ENCODE measurements at regions of chr1 and their contacts with region 1.

Region 1: GRCh38 chr1:160219062-160219929 is 14.1 kb downstream of the PEA15 start:
- DNase-seq: peak; percentile 55
- H3K4me3 ChIP-seq: no peak overlapping the region
- H3K27ac ChIP-seq: peak overlapping the region; percentile 71
- H3K27me3 ChIP-seq: no peaks in the 10 kb centered on the region
- CTCF ChIP-seq: peak; percentile 84

Region 2: DNA sequence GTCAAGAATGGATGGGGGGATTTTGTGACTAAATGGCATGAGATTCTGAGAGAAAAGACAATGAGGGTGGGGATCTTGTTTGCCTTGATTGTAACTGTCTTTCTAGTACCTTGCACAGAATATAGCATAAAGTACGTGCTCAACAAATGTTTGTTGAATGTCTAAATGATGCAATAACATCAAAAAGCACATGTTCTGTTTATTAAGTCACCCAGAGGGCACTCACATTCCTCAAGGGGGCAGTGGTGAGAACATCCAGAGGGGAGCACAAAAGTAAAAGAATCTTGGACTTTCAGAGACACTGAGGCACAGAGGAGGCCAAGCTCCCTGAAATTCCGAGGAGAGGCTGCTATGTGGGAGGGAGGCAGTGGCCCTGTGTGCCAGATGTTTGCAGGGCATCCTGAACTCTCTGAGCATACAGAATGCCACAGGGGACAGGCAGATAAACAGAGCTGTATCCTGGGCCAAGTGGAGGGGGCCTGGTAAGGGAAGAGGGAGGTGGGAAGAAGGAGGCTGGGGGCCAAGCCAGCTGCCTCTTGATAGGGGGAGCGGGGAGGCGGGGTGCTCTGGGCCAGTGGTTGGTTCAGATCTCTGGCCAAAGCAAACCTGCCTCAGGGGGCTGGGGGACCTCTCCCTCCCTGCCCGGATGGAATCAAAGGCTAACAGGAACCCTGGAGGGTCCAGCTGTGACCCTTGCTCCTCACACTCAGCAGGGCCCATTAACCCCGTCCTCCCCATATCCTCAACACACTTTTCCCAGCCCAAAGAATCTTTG is 110.2 kb before region 1 on chr1:
- CTCF ChIA-PET with region 1: interaction called, 212 read pairs
- POLR2A ChIA-PET with region 1: interaction called, 3 read pairs
- DNase-seq: no peak
- H3K4me3 ChIP-seq: no peak overlapping the region
- H3K27ac ChIP-seq: no peak overlapping the region
- H3K27me3 ChIP-seq: peaks cover 16% of the 10 kb centered on the region
- CTCF ChIP-seq: peak; percentile 55

Region 3: GRCh38 chr1:160205242-160206035 is 13.9 kb before region 1 on chr1 and contains the start of gene PEA15:
- CTCF ChIA-PET with region 1: interaction called, 22 read pairs
- POLR2A ChIA-PET with region 1: interaction called, 4 read pairs
- DNase-seq: no peak
- H3K4me3 ChIP-seq: peak within 1 kb of the TSS; percentile 95
- H3K27ac ChIP-seq: peak within 1 kb of the TSS; percentile 75
- H3K27me3 ChIP-seq: no peaks in the 10 kb centered on the region
- CTCF ChIP-seq: no peak
- polyA plus RNA-seq, gene PEA15: 512 and 555 TPM in 2 replicates

Region 4: DNA sequence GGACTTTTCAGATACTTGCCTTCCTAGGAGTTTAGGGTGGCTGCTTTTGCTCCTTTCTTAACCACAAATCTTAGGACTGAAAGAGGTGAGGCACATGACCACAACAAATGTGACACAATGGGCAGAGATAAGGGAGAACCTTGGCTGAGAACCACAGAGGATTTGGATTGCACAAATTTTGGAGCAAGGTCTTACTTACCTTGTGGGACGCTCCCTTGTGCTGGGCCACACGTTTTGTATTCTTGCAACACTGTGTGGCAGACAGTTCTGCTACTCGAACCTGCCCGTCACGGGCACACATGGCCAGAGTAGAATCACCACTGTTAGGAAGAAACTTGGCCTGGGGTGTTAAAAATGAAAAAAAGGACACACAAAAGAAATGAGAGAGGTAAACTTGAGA is 19.1 kb after region 1 on chr1:
- CTCF ChIA-PET with region 1: interaction called, 52 read pairs
- POLR2A ChIA-PET with region 1: interaction called, 3 read pairs
- DNase-seq: no peak
- H3K4me3 ChIP-seq: no peak overlapping the region
- H3K27ac ChIP-seq: no peak overlapping the region
- H3K27me3 ChIP-seq: no peaks in the 10 kb centered on the region
- CTCF ChIP-seq: no peak

Region 5: GRCh38 chr1:160309180-160309530 is 89.9 kb after region 1 on chr1:
- CTCF ChIA-PET with region 1: no interaction called
- POLR2A ChIA-PET with region 1: no interaction called
- DNase-seq: no peak
- H3K4me3 ChIP-seq: no peak overlapping the region
- H3K27ac ChIP-seq: no peak overlapping the region
- H3K27me3 ChIP-seq: no peaks in the 10 kb centered on the region
- CTCF ChIP-seq: no peak